HEK293 (cell line): ENCODE measurements at regions of chr7 and their contacts with region 1.

Region 1: GRCh38 chr7:76314042-76314721 is 11.7 kb downstream of the HSPB1 start:
- H3K4me3 ChIP-seq: peak overlapping the region; percentile 13; the same call in 1 of the 2 replicates
- H3K27ac ChIP-seq: no peak overlapping the region; the same call in 1 of the 2 replicates
- H3K4me1 ChIP-seq: peaks cover 5% of the 10 kb centered on the region; the same call in 1 of the 2 replicates
- CTCF ChIP-seq: peak; percentile 97

Region 2: GRCh38 chr7:76179686-76180085 is 134.5 kb before region 1 on chr7:
- CTCF ChIA-PET with region 1: interaction called, 69 read pairs
- POLR2A ChIA-PET with region 1: interaction called, 4 read pairs
- H3K4me3 ChIP-seq: no peak overlapping the region
- H3K27ac ChIP-seq: no peak overlapping the region
- H3K4me1 ChIP-seq: no peaks in the 10 kb centered on the region
- CTCF ChIP-seq: no peak

Region 3: DNA sequence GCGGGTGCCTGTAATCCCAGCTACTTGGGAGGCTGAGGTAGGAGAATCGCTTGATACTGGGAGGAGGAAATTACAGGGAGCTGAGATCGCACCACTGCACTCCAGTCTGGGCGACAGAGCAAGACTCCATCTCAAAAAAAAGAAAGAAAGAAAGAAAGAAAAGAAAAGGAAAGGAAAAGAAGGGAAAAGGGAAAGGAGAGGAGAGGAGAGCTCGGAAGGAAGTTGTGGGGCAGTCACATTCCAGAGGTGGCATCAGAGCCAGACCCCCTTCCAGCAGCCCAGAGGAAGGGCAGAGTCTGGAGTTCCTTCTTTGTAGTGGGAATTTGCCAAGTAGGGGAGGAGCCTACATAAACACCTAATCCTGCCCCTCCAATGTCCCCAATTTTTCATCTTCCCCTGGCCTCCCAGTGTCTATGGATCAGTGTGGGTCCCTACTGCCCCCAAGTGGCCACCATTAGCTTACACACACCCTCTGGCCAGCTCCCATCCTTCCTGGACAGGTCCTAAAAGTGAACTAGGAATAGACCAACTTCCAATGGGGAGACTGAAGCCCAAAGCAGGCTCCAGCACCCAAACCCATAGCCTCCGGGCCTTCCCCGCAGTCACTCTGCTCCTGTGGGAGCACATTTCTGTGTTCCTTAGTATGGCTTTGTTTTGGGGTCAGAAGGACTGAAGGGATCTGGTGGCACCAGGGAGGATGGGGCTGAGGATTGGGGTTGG is 51.3 kb before region 1 on chr7:
- CTCF ChIA-PET with region 1: interaction called, 27 read pairs
- POLR2A ChIA-PET with region 1: interaction called, 7 read pairs
- H3K4me3 ChIP-seq: no peak overlapping the region
- H3K27ac ChIP-seq: no peak overlapping the region
- H3K4me1 ChIP-seq: no peaks in the 10 kb centered on the region
- CTCF ChIP-seq: 0 out of 2 replicates have a peak, but pooled peaks have one; percentile 13

Region 4: DNA sequence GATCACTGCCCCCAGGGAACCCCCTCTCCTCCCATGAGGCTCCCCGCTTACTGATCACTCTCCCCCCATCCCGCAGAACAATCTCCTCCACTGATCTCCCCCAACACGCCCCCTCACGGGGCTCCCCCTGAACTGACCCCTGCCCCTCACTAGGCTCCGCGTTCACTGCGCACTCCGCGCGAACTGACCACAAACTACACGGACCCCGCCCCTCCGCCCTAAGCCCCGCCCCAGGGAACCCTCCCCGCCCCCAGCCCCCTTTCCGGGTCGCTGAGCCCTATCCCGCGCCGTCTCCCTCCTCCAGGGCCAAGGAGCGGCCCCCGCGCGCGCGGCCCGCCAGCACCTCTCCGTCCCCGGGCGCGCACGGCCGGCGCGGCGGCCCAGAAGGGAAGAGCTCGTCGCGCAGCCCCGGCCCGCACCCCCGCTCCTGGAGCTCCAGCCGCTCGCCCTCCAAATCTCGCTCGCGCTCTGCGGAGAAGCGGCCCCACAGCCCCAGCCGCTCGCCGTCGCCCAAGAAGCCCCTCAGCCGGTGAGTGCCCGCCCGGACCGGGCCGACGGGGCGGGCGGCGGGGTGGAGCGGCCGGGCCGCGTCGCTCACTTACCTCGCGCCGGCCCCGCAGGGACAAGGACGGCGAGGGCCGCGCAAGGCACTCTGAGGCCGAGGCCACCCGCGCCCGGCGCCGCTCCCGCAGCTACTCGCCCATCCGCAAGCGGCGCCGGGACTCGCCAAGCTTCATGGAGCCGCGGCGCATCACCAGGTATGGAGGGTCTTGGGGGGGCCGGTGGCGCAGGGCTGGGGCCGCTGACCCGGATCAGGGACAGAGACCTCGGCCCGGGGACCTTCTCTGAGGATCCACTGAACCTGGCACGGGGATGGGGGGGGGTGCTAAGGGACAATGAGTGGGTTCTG is 31.6 kb before region 1 on chr7:
- CTCF ChIA-PET with region 1: interaction called, 24 read pairs
- POLR2A ChIA-PET with region 1: interaction called, 6 read pairs
- H3K4me3 ChIP-seq: no peak overlapping the region; the same call in 1 of the 2 replicates
- H3K27ac ChIP-seq: no peak overlapping the region
- H3K4me1 ChIP-seq: no peaks in the 10 kb centered on the region
- CTCF ChIP-seq: no peak

Region 5: DNA sequence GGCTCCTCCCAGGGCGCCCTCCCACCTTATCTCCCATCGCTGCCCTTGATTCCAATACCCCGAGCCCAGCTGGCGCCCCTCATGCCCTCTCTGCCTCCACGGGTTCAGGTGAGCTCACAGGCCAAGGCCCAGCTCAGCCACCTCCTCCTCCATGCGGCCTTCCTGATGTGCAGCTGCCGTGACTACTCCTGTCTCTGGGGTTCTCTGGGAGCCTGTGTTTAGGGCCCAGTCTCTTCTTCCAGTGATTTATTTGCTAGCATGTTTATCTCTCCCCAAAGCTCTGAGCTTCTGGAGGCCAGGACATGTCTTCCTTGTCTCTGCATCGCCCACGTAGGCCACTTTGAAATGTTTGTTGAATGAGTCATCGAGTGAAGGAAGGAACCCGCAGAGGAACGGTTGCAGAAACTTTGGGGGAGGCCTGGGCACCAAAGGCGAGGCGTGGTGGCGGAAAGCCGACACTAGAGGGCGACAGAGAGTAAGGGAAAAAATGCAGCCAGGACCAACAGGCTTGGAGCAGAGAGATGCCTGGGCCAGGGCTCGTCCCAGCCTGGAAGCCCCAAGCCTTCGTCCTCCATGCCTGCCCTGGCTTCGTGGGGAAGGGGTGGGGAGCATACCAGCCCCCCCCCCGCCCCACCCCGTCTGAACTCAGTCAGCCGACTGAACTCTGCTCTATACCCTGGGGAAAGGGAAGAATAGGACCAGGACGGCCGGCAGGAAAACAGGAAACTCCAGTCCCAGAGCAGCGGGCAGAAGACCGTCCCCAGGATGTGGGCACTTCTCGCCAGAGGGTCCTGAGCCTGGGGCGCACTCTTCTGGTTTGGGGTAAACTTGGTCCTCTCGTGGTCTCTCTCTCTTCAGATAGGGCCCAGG is 22.6 kb before region 1 on chr7:
- CTCF ChIA-PET with region 1: interaction called, 133 read pairs
- POLR2A ChIA-PET with region 1: interaction called, 7 read pairs
- H3K4me3 ChIP-seq: no peak overlapping the region
- H3K27ac ChIP-seq: peak overlapping the region; percentile 48; the same call in 1 of the 2 replicates
- H3K4me1 ChIP-seq: no peaks in the 10 kb centered on the region
- CTCF ChIP-seq: peak; percentile 80

Region 6: GRCh38 chr7:76297387-76297756 is 16.8 kb before region 1 on chr7:
- CTCF ChIA-PET with region 1: interaction called, 133 read pairs
- POLR2A ChIA-PET with region 1: interaction called, 5 read pairs
- H3K4me3 ChIP-seq: no peak overlapping the region
- H3K27ac ChIP-seq: no peak overlapping the region
- H3K4me1 ChIP-seq: no peaks in the 10 kb centered on the region
- CTCF ChIP-seq: no peak

Region 7: GRCh38 chr7:76359111-76359978 is 45.2 kb after region 1 on chr7:
- CTCF ChIA-PET with region 1: interaction called, 7 read pairs
- POLR2A ChIA-PET with region 1: interaction called, 24 read pairs
- H3K4me3 ChIP-seq: peak overlapping the region; percentile 100
- H3K27ac ChIP-seq: peak overlapping the region; percentile 85
- H3K4me1 ChIP-seq: peaks cover 4% of the 10 kb centered on the region
- CTCF ChIP-seq: peak; percentile 81